BJ (cell line): ENCODE measurements at regions of chr13 and their contacts with region 1.

Region 1: DNA sequence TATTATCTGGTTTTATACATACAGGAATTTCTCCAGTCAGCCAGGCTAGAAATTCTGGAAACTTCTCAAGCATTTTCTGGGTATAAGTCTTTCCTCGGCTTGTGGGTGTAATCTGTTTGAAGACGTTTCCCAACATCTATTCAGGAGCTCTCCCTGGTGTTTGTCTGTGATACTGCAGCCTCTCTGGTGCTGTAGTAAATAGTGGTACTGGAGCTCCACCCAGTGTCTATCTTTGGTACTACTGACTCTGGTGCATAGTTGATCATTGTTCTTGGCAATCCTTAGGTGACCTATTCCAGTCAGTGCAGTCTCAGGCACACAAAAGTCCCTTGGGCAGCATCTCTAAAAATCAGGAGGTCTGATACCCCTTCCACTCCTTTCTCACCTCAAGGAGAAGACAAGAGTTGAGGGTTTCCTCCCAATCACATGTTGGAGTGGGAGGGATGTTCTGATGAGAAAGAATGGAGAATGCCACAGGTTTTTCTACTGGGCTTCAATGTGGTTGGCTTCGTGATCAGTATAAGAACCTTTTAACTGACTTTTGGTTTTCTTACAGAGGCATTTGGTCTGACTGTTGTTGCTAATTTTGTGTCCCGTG is 115.5 kb downstream of the CYSLTR2 start:
- DNase-seq: peak; percentile 53
- H3K4me3 ChIP-seq: no peak overlapping the region
- H3K27me3 ChIP-seq: peaks cover 13% of the 10 kb centered on the region
- CTCF ChIP-seq: peak; percentile 95

Region 2: DNA sequence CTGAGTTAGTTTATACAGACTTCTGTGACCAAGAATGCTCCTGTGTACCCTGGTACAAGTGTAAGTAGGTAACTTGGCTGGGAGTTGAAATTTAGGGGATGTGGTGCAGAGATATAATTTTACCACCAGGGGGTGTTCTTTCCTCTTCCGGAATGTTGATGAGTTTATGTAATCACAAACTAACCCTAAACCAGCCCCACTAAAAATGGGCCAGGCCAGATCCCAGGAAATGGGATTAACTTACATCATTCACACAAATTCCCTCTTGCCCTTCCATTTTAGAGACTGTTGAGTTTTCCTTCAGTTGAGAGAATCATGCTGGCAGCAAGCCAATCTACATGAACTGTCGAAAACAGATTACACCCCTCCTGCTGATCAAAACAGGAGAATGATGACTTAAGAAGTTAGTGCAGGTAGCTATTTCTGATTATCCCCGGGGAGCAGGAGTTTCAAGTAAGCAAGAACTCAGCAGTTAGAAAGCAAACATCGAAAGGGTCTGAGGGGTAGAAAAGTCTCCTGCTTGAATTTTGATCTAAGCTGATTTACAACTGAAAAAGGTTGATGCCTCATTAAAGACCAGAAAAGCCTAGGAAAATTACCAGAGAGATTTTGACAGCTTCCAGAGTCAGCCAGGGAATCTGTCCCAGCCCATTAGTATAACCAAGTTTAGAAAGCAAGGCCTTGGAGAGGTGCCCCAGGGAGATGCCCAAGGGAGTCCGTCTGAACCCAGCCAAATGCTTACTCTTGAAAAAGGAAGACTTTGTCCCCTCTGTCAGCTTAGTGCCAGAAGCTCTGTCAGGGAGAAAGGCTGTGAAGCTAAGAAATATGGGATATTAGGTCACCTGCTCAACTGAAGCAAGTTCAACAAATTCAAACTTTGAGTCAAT is 642.0 kb before region 1 on chr13:
- CTCF ChIA-PET with region 1: interaction called, 14 read pairs
- POLR2A ChIA-PET with region 1: no interaction called
- DNase-seq: peak; percentile 14
- H3K4me3 ChIP-seq: no peak overlapping the region
- H3K27me3 ChIP-seq: no peaks in the 10 kb centered on the region
- CTCF ChIP-seq: peak; percentile 66

Region 3: DNA sequence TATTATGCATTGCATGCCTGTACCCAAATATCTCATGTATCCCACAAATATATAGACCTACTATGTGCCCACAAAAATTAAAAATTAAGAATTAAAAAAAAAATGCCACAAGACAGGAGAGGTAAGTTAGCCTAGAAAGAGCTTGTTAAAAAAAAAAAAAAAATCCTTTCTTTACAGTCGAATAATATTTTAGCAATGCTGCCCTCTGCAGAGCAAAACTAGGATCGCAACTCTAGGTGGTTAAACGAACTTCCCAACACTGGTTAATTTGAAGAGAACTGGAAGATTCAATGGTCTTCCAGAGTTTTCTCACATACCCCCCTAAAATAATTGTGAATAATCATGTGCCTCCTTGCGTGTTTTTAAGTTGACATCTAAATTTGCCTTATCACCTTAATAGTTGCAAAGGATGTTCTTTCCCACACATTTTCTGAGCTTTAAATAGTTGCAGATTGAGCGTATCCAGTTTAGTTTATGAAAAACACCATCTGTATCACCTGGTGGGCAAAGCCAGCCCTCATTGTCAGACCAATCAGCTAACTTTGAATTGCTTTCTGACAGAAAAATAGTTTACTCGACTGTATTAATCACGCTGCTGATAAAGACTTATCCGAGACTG is 188.9 kb before region 1 on chr13:
- CTCF ChIA-PET with region 1: interaction called, 13 read pairs
- POLR2A ChIA-PET with region 1: no interaction called
- DNase-seq: peak; percentile 19
- H3K4me3 ChIP-seq: no peak overlapping the region
- H3K27me3 ChIP-seq: peaks cover 4% of the 10 kb centered on the region
- CTCF ChIP-seq: peak; percentile 68

Region 4: DNA sequence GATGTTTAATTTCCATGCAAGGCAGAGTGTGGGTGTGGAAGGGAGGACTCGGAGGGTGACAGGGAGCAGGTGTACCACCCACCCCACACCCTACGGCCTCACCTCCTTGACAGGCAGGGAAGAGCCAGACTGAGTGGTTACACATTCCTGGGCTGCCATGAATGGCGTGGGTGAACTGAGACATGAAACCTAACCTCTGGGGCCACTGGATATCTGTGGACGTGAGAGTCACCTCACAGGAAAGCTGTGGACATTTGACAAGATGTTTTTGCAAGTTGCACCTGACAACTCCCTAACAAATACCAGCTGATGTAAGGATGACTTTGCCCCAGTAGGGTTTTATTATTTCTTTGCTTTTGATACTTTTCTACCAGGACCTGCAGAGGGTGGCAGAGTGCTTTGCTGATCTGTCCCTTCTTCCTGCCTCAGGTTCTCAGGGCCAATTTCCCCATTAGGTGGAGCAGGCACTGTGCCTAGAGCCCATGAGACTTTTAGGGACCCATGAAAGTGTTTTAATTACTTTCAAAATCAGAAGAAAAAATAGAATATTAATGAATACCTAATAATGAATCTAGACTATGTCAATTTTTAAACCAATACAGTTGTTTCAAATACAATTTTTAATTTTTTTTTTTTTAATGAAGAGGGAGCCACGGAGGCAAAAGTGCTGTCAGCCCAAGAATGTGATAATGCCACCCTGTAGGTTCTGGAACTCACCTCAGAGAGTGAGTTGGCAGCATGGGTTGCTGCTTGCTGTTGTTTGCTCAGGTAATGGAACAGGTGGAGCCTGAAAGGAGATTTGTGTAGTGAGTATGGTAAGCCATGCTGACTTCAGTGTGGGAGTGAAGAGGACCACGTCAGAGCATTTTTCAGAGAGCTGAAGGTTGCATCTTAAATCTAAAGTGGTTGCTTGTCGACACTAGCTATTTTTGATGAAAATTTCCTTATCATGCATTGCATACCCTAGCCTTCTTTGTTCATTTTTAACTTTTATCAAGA is 173.5 kb before region 1 on chr13:
- CTCF ChIA-PET with region 1: interaction called, 81 read pairs
- POLR2A ChIA-PET with region 1: no interaction called
- DNase-seq: no peak
- H3K4me3 ChIP-seq: no peak overlapping the region
- H3K27me3 ChIP-seq: peaks cover 10% of the 10 kb centered on the region
- CTCF ChIP-seq: peak; percentile 55

Region 5: DNA sequence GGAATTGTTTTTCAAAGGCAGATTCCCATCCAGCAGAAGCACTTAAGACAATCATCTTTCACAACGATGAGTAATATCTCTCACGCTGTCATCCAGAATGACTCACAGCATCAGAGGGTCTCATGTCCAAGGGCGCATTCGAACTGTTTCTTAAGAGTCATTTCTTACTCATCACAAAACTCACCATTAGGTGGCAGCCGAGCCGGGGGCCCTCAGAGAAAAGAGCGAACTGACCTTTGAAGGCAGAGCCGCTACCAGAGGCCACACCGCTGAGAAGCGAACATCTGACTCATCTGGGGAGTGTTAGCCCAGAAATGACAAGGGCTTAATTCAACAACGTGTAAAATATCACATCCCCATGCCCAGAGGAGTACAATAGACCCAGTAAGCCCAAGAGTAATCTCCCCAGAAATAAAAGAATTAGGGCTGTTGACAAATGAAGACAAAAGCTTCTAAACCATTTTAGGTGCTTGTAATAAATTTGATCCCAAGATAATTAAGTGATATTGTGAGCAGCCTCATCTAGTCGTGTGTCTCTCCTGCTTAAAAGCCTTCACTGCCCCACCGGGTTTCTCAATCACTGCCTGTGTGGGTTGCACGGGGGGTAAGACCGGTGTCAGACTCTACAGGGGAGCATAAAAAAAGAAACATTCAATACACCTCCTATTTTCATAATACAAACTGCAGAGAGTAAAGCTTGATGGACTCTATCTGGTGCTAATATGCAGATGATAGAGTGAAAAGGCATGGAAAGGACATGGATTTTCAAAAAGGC is 19.3 kb before region 1 on chr13:
- CTCF ChIA-PET with region 1: interaction called, 44 read pairs
- POLR2A ChIA-PET with region 1: no interaction called
- DNase-seq: peak; percentile 77
- H3K4me3 ChIP-seq: no peak overlapping the region
- H3K27me3 ChIP-seq: peaks cover 2% of the 10 kb centered on the region; the same call in 1 of the 2 replicates
- CTCF ChIP-seq: peak; percentile 69

Region 6: GRCh38 chr13:48783181-48783630 is 14.0 kb after region 1 on chr13:
- CTCF ChIA-PET with region 1: interaction called, 10 read pairs
- POLR2A ChIA-PET with region 1: no interaction called
- DNase-seq: peak; percentile 88
- H3K4me3 ChIP-seq: no peak overlapping the region
- H3K27me3 ChIP-seq: no peaks in the 10 kb centered on the region
- CTCF ChIP-seq: no peak